ENCODE measurements at regions of chr6 and their contacts with region 1.

Region 1: GRCh38 chr6:53359072-53359842 is 10.5 kb upstream of the ELOVL5 start:
- DNase-seq: peak; percentile 95
- H3K4me3 Mint-ChIP-seq: peak overlapping the region; percentile 92
- H3K27ac Mint-ChIP-seq: peak overlapping the region; percentile 98
- H3K4me1 Mint-ChIP-seq: peaks cover 39% of the 10 kb centered on the region
- H3K27me3 Mint-ChIP-seq: no peaks in the 10 kb centered on the region

Region 2: GRCh38 chr6:53064726-53065215 is 294.5 kb before region 1 on chr6:
- CTCF ChIA-PET with region 1: no interaction called
- POLR2A ChIA-PET with region 1: no interaction called
- intact Hi-C with region 1: loop called (anchors 5 kb)
- DNase-seq: peak; percentile 98
- H3K4me3 Mint-ChIP-seq: peak overlapping the region; percentile 100
- H3K27ac Mint-ChIP-seq: peak overlapping the region; percentile 97
- H3K4me1 Mint-ChIP-seq: peaks cover 52% of the 10 kb centered on the region
- H3K27me3 Mint-ChIP-seq: no peaks in the 10 kb centered on the region

Region 3: GRCh38 chr6:53294095-53294494 is 65.2 kb before region 1 on chr6:
- CTCF ChIA-PET with region 1: no interaction called
- POLR2A ChIA-PET with region 1: interaction called, 4 read pairs
- intact Hi-C with region 1: loop called (anchors 2 kb)
- DNase-seq: no peak
- H3K4me3 Mint-ChIP-seq: no peak overlapping the region
- H3K27ac Mint-ChIP-seq: no peak overlapping the region
- H3K4me1 Mint-ChIP-seq: peaks cover 77% of the 10 kb centered on the region
- H3K27me3 Mint-ChIP-seq: no peaks in the 10 kb centered on the region

Region 4: GRCh38 chr6:53322188-53323029 is 36.8 kb before region 1 on chr6:
- CTCF ChIA-PET with region 1: no interaction called
- POLR2A ChIA-PET with region 1: no interaction called
- intact Hi-C with region 1: loop called (anchors 1 kb)
- DNase-seq: no peak
- H3K4me3 Mint-ChIP-seq: no peak overlapping the region
- H3K27ac Mint-ChIP-seq: peak overlapping the region; percentile 60
- H3K4me1 Mint-ChIP-seq: peaks cover 65% of the 10 kb centered on the region
- H3K27me3 Mint-ChIP-seq: no peaks in the 10 kb centered on the region

Region 5: DNA sequence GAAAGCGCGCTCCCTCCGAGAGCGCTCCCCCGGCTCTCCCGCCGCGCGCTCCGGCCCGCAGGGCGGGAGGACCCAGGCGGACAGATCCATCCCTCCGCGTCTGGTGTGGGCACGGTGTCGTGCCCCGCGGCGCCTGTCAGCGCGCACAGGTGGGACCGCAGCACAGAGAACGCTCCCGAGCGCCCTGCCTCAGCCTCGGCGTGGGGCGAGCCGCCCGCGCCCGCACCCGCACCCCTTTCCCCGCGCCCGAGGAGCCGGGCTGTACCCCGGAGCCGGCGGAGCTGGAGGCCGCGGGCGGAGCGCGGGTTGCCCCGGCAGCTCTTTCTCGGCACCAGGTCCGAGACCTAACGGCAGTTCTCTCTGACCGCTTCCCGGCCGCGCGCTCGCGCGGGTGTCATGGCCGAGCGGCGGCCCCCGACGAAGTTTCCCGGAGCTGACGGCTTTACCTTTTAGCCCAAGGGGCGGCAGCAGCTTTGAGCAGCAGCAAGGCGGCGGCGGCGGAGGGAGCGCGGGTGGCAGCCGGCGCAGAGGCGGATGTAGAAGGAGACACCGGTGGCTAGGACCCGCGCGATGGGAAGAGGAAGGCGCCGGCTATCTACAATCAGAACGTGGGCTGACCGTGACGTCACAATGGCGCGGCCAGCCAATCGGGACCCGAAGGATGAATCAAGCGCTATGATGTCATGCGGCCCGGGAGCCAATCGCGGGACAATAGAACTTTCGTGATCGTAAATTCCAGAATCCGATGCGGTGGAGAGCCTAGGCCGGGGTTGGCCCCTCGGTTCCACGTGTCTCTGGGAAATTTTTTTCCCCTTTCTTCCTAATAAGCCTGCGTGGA is 10.7 kb before region 1 on chr6 and contains the start of gene ELOVL5:
- CTCF ChIA-PET with region 1: interaction called, 7 read pairs
- POLR2A ChIA-PET with region 1: interaction called, 42 read pairs
- intact Hi-C with region 1: loop called (anchors 1 kb)
- DNase-seq: peak; percentile 98
- H3K4me3 Mint-ChIP-seq: peak within 1 kb of the TSS; percentile 93
- H3K27ac Mint-ChIP-seq: peak within 1 kb of the TSS; percentile 95
- H3K4me1 Mint-ChIP-seq: peaks cover 43% of the 10 kb centered on the region
- H3K27me3 Mint-ChIP-seq: no peaks in the 10 kb centered on the region
- total RNA-seq, gene ELOVL5: 112 to 121 TPM